ENCODE measurements at regions of chr17 and their contacts with region 1.

Region 1: GRCh38 chr17:47649153-47649971 is at the start of gene KPNB1:
- DNase-seq: peak; percentile 90 to 99 (median 97)
- ATAC-seq: peak; percentile 84 to 86
- H3K4me3 Mint-ChIP-seq: peak within 1 kb of the TSS; percentile 90 to 100 (median 98)
- H3K27ac Mint-ChIP-seq: peak within 1 kb of the TSS; percentile 91 to 99 (median 98)
- H3K4me1 Mint-ChIP-seq: peaks cover 31 to 66% (median 54%) of the 10 kb centered on the region in 4 donors
- H3K27me3 Mint-ChIP-seq: no peaks in the 10 kb centered on the region
- polyA plus RNA-seq, gene KPNB1: 22.8 to 32.2 (median 25.7) TPM

Region 2: GRCh38 chr17:47323382-47324222 is 325.8 kb before region 1 on chr17 and contains the start of gene EFCAB13:
- POLR2A ChIA-PET with region 1: interaction called, 10 read pairs
- DNase-seq: peak; percentile 70 to 91 (median 78)
- ATAC-seq: peak; percentile 83 to 88
- H3K4me3 Mint-ChIP-seq: peak within 1 kb of the TSS; percentile 91 to 100 (median 98)
- H3K27ac Mint-ChIP-seq: peak within 1 kb of the TSS; percentile 91 to 100 (median 99)
- H3K4me1 Mint-ChIP-seq: peaks cover 9 to 24% (median 20%) of the 10 kb centered on the region in 4 donors
- H3K27me3 Mint-ChIP-seq: no peaks in the 10 kb centered on the region
- polyA plus RNA-seq, gene EFCAB13: 3.6 to 11.8 (median 11.0) TPM

Region 3: GRCh38 chr17:47629826-47630225 is 19.5 kb before region 1 on chr17:
- POLR2A ChIA-PET with region 1: interaction called, 10 read pairs
- DNase-seq: no peak
- ATAC-seq: no peak
- H3K4me3 Mint-ChIP-seq: no peak overlapping the region
- H3K27ac Mint-ChIP-seq: peak overlapping the region in 1 of 10 donors; percentile 28
- H3K4me1 Mint-ChIP-seq: peaks cover 0 to 4% (median 0%) of the 10 kb centered on the region in 4 donors
- H3K27me3 Mint-ChIP-seq: no peaks in the 10 kb centered on the region

Region 4: GRCh38 chr17:47663912-47664625 is 14.7 kb after region 1 on chr17:
- POLR2A ChIA-PET with region 1: interaction called, 88 read pairs
- DNase-seq: peak; percentile 24 to 75 (median 58)
- ATAC-seq: peak; percentile 63 to 73
- H3K4me3 Mint-ChIP-seq: peak overlapping the region in 1 of 10 donors; percentile 2
- H3K27ac Mint-ChIP-seq: peak overlapping the region in 9 of 10 donors; percentile 27 to 88 (median 70)
- H3K4me1 Mint-ChIP-seq: peaks cover 10 to 31% (median 20%) of the 10 kb centered on the region in 4 donors
- H3K27me3 Mint-ChIP-seq: no peaks in the 10 kb centered on the region

Region 5: DNA sequence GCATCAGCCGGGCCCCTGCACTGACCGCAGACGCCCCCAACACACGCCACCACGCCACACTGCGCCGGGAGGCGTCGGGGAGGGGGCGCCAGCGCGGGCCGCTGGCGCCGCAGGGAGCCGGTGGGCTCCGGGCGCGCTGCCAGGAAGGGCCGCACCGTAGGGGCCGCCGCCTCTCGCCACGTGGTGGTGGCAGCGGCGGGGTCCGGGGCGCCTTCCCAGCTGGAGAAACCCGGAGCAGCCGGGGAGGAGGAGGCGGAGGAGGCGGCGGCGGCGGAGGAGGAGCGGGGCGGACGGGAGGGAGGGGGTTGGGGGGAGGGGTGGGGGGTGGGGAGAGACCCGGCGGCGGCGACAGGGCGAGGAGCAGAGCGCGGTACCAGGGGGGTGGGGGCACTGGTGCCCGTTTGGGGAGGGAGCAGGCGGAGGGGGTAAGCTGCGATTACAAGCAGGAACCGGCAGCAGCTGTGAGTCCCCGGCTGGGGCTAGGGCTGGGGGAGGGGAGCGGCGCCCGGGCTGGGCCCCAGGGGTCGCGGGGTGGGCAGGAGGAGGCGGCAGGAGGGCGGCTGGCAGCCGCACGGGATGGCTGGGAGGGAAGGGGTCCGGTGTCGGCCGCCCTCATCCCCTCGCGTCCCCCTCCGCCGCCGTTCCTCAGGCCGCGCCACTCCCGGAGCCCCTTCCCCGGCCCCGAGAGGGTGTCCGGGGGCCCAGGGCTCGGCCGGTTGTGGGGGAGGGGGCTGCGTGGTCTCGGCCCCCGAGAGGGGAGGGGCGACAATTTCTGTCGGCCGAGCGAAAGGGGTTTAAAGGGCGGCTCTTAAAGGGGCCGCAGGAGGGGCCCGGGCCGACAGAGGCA is 44.6 kb after region 1 on chr17 and contains the start of gene TBKBP1:
- POLR2A ChIA-PET with region 1: interaction called, 10 read pairs
- DNase-seq: peak in 8 of 10 donors; percentile 24 to 73 (median 36)
- ATAC-seq: peak; percentile 60 to 62
- H3K4me3 Mint-ChIP-seq: peak within 1 kb of the TSS; percentile 85 to 95 (median 91)
- H3K27ac Mint-ChIP-seq: peak within 1 kb of the TSS in 8 of 10 donors; percentile 73 to 92 (median 82)
- H3K4me1 Mint-ChIP-seq: peaks cover 23 to 36% (median 30%) of the 10 kb centered on the region in 4 donors
- H3K27me3 Mint-ChIP-seq: no peaks in the 10 kb centered on the region
- polyA plus RNA-seq, gene TBKBP1: 0.07 to 0.59 TPM in 2 of 3 donors, not detected in the other

Measured in naive thymus-derived CD8-positive, alpha-beta T cell (primary cell).